Panc1 (cell line): ENCODE measurements at regions of chr5 and their contacts with region 1.

Region 1: GRCh38 chr5:120306303-120306702 is 157.8 kb upstream of the PRR16 start:
- DNase-seq: no peak
- ATAC-seq: no peak
- H3K4me3 ChIP-seq: no peak overlapping the region
- H3K27ac ChIP-seq: no peak overlapping the region
- H3K4me1 ChIP-seq: no peaks in the 10 kb centered on the region
- H3K27me3 ChIP-seq: no peaks in the 10 kb centered on the region
- CTCF ChIP-seq: no peak

Region 2: GRCh38 chr5:119840175-119840574 is 466.1 kb before region 1 on chr5:
- CTCF ChIA-PET with region 1: no interaction called
- POLR2A ChIA-PET with region 1: interaction called, 11 read pairs
- in situ Hi-C with region 1: no loop called
- intact Hi-C with region 1: no loop called
- DNase-seq: no peak
- ATAC-seq: no peak
- H3K4me3 ChIP-seq: no peak overlapping the region
- H3K27ac ChIP-seq: no peak overlapping the region
- H3K4me1 ChIP-seq: no peaks in the 10 kb centered on the region
- H3K27me3 ChIP-seq: no peaks in the 10 kb centered on the region
- CTCF ChIP-seq: no peak

Region 3: DNA sequence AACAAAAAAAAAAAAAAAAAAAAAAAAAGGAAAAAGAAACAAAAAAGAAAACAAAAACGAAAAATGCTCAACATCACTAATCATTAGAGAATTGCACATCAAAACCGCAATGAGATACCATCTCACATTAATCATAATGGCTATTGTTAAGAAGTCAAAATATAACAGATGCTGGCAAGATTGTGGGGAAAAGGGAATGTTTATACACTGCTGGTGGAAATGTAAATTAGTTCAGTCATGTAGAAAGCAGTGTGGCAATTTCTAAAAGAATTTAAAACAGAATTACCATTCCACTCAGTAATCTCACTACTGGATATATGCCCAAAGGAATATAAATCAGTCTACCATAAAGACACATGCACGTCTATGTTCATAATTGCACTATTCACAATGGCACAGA is 107.4 kb after region 1 on chr5:
- CTCF ChIA-PET with region 1: no interaction called
- POLR2A ChIA-PET with region 1: no interaction called
- in situ Hi-C with region 1: no loop called
- intact Hi-C with region 1: no loop called
- DNase-seq: no peak
- ATAC-seq: no peak
- H3K4me3 ChIP-seq: no peak overlapping the region
- H3K27ac ChIP-seq: no peak overlapping the region
- H3K4me1 ChIP-seq: no peaks in the 10 kb centered on the region
- H3K27me3 ChIP-seq: no peaks in the 10 kb centered on the region
- CTCF ChIP-seq: no peak